ENCODE measurements at regions of chr5 and their contacts with region 1.

Region 1: GRCh38 chr5:93454896-93455295 is 126.1 kb downstream of the NR2F1-AS1 start:
- DNase-seq: no peak
- H3K4me3 ChIP-seq: no peak overlapping the region
- H3K27ac ChIP-seq: no peak overlapping the region
- H3K4me1 ChIP-seq: no peaks in the 10 kb centered on the region
- H3K27me3 ChIP-seq: no peaks in the 10 kb centered on the region
- CTCF ChIP-seq: no peak

Region 2: GRCh38 chr5:93186076-93186682 is 268.7 kb before region 1 on chr5:
- CTCF ChIA-PET with region 1: no interaction called
- POLR2A ChIA-PET with region 1: no interaction called
- intact Hi-C with region 1: no loop called
- DNase-seq: no peak
- H3K4me3 ChIP-seq: no peak overlapping the region
- H3K27ac ChIP-seq: no peak overlapping the region
- H3K4me1 ChIP-seq: peaks cover 26% of the 10 kb centered on the region
- H3K27me3 ChIP-seq: no peaks in the 10 kb centered on the region
- CTCF ChIP-seq: no peak

Region 3: DNA sequence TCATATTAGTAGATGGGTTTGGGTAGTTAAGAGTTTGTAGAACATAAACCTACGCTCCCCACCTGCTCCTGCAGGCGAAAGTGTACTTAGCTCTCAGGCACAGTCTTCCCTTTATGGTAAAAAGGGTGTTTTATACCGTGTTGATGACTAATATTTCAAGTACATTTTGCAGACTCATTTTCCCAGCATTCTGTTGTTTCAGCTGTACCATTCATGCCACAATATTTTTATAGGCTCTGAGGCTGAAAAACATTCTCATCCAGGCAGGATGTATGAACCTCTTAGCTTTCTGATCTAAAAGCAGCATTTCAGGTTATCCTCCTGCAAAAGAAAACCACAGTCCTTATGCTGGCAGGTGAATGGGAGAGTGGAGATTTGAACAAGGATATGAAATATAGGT is 105.3 kb before region 1 on chr5:
- CTCF ChIA-PET with region 1: no interaction called
- POLR2A ChIA-PET with region 1: no interaction called
- intact Hi-C with region 1: no loop called
- DNase-seq: peak in 1 of 2 experiments; percentile 53
- H3K4me3 ChIP-seq: no peak overlapping the region
- H3K27ac ChIP-seq: 0 out of 2 replicates have a peak overlapping the region, but pooled peaks have one; percentile 3
- H3K4me1 ChIP-seq: peaks cover 7% of the 10 kb centered on the region; the same call in 1 of the 2 replicates
- H3K27me3 ChIP-seq: no peaks in the 10 kb centered on the region
- CTCF ChIP-seq: no peak

Region 4: GRCh38 chr5:93497096-93497495 is 42.2 kb after region 1 on chr5:
- CTCF ChIA-PET with region 1: no interaction called
- POLR2A ChIA-PET with region 1: interaction called, 11 read pairs
- intact Hi-C with region 1: no loop called
- DNase-seq: no peak
- H3K4me3 ChIP-seq: no peak overlapping the region
- H3K27ac ChIP-seq: no peak overlapping the region
- H3K4me1 ChIP-seq: no peaks in the 10 kb centered on the region
- H3K27me3 ChIP-seq: no peaks in the 10 kb centered on the region
- CTCF ChIP-seq: no peak

Region 5: DNA sequence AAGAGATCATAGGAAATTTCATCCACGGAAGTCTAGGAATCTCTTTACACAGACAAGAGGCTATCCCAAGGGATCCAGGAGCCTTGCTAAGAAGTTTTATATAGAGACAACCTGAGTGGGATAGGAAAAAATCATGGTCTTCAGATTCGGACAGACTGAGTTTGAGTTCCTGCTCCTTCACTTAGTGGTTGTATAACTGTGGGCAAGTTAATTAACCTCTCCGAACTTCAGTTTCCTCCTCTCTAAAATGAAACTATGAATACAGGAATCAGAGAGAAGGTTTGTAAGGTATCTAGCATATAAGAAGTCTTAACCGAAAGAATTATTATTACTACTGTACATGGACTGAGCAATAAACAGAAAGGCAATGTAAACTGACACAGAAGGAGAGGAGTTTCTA is 91.0 kb after region 1 on chr5:
- CTCF ChIA-PET with region 1: no interaction called
- POLR2A ChIA-PET with region 1: no interaction called
- intact Hi-C with region 1: no loop called
- DNase-seq: no peak
- H3K4me3 ChIP-seq: no peak overlapping the region
- H3K27ac ChIP-seq: no peak overlapping the region
- H3K4me1 ChIP-seq: no peaks in the 10 kb centered on the region
- H3K27me3 ChIP-seq: no peaks in the 10 kb centered on the region
- CTCF ChIP-seq: no peak

Measured in PC-9 (cell line).